Activated CD4-positive, alpha-beta T cell treated with anti-CD3 and anti-CD28 coated beads, Interleukin-2, amount 10 ng/mL, durations not matched to agents 24 days and 14 days (primary cell): ENCODE measurements at regions of chr1 and their contacts with region 1.

Region 1: DNA sequence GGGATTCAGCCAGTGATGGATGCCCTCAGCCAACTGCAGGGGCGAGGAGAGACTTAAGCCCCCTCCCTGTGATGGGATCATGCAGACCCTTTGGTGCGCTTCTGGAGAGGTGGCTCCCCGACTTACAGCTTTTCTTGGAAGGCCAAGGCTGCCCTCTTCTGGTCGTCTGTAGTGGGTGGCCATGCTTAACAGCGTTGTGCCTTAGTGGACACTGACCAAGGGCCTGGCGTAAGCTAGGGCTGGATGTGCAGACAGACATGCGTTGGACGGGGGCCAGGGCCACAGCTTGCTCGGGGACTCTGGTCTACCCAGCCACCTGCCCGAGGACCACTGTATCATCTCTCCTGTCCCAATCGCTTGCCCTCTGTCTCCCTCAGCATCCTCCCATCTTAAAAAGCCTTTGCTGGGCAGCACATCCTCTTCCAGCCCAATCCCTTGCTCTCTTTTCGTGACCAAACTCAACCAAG is 5.5 kb downstream of the AZIN2 start:
- DNase-seq: peak; percentile 82
- H3K4me3 Mint-ChIP-seq: no peak overlapping the region
- H3K27ac Mint-ChIP-seq: no peak overlapping the region
- H3K4me1 Mint-ChIP-seq: peaks cover 42% of the 10 kb centered on the region
- H3K27me3 Mint-ChIP-seq: peaks cover 16% of the 10 kb centered on the region

Region 2: GRCh38 chr1:32876341-32877210 is 209.8 kb before region 1 on chr1:
- intact Hi-C with region 1: loop called (anchors 1 kb)
- DNase-seq: peak; percentile 92
- H3K4me3 Mint-ChIP-seq: no peak overlapping the region
- H3K27ac Mint-ChIP-seq: no peak overlapping the region
- H3K4me1 Mint-ChIP-seq: no peaks in the 10 kb centered on the region
- H3K27me3 Mint-ChIP-seq: peaks cover 37% of the 10 kb centered on the region

Region 3: GRCh38 chr1:32933742-32934322 is 152.6 kb before region 1 on chr1:
- intact Hi-C with region 1: loop called (anchors 1 kb)
- DNase-seq: no peak
- H3K4me3 Mint-ChIP-seq: no peak overlapping the region
- H3K27ac Mint-ChIP-seq: no peak overlapping the region
- H3K4me1 Mint-ChIP-seq: peaks cover 21% of the 10 kb centered on the region
- H3K27me3 Mint-ChIP-seq: no peaks in the 10 kb centered on the region